ENCODE measurements at regions of chr2 and their contacts with region 1.

Region 1: GRCh38 chr2:31170071-31170698 is 31.9 kb upstream of the GALNT14 start:
- H3K4me3 ChIP-seq: no peak overlapping the region
- H3K27ac ChIP-seq: no peak overlapping the region
- H3K4me1 ChIP-seq: no peaks in the 10 kb centered on the region
- CTCF ChIP-seq: peak; percentile 69

Region 2: DNA sequence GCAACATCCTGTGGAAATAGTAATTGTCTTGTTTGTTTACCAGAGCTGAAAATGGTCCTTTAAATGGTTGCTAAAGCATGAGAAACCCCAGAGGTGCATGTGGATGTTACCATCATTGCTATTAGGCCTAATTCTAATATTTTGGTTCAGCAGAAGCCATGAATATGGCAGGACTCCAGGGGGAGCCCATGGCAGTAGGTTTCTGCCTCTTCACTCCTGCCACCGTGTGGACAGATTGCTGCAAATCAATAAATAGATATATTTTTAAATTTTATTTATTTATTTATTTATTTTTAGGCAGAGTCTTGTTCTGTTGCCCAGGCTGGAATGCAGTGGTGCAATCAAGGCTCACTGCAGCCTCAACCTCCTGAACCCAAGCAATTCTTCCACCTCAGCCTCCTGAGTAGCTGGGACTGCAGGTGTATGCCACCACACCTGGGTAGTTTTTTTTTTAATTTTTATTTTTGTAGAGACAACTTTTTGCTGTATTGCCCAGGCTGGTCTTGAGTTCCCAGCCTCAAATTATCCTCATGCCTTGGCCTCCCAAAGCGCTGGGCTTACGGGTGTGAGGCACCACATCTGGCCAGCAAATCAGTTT is 308.0 kb before region 1 on chr2:
- CTCF ChIA-PET with region 1: interaction called, 60 read pairs
- POLR2A ChIA-PET with region 1: no interaction called
- H3K4me3 ChIP-seq: no peak overlapping the region
- H3K27ac ChIP-seq: no peak overlapping the region
- H3K4me1 ChIP-seq: no peaks in the 10 kb centered on the region; the same call in 1 of the 2 replicates
- CTCF ChIP-seq: no peak; the same call in 1 of the 2 replicates

Region 3: DNA sequence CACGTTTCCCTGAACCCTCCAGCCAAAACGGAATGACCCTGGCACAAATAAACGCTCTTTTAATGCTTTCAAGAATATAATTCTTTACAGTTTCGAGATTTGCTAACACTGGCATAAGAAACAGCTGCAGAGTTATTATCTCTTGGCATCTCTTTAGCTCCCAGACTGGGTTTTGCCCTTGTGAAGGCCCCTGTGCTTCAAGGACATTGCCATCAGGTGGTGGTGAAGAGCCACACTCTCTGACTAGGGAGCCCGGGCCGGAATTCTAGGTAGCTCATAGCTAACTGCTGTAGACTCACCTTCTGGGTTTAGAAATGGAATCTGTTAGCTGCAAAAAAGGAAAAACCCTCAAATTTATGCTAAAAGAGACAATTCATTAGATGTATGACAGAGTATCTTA is 18.7 kb before region 1 on chr2:
- CTCF ChIA-PET with region 1: interaction called, 22 read pairs
- POLR2A ChIA-PET with region 1: no interaction called
- H3K4me3 ChIP-seq: no peak overlapping the region
- H3K27ac ChIP-seq: no peak overlapping the region
- H3K4me1 ChIP-seq: no peaks in the 10 kb centered on the region
- CTCF ChIP-seq: no peak

Measured in HEK293 (cell line).